ENCODE measurements at regions of chr10 and their contacts with region 1.

Region 1: GRCh38 chr10:102394079-102394800 is 1.3 kb upstream of the NFKB2 start:
- DNase-seq: peak; percentile 95
- H3K4me3 ChIP-seq: peak overlapping the region; percentile 75
- H3K4me3 Mint-ChIP-seq: peak overlapping the region; percentile 90
- H3K27ac Mint-ChIP-seq: peak overlapping the region; percentile 90
- H3K4me1 ChIP-seq: peaks cover 14% of the 10 kb centered on the region
- H3K4me1 Mint-ChIP-seq: peaks cover 14% of the 10 kb centered on the region
- H3K27me3 ChIP-seq: no peaks in the 10 kb centered on the region
- H3K27me3 Mint-ChIP-seq: no peaks in the 10 kb centered on the region
- CTCF ChIP-seq: no peak

Region 2: GRCh38 chr10:102404391-102405107 is 10.3 kb after region 1 on chr10:
- CTCF ChIA-PET with region 1: interaction called, 20 read pairs
- POLR2A ChIA-PET with region 1: interaction called, 6 read pairs
- intact Hi-C with region 1: no loop called
- DNase-seq: no peak
- H3K4me3 ChIP-seq: no peak overlapping the region
- H3K4me3 Mint-ChIP-seq: no peak overlapping the region
- H3K27ac Mint-ChIP-seq: no peak overlapping the region
- H3K4me1 ChIP-seq: peaks cover 26% of the 10 kb centered on the region
- H3K4me1 Mint-ChIP-seq: peaks cover 24% of the 10 kb centered on the region
- H3K27me3 ChIP-seq: no peaks in the 10 kb centered on the region
- H3K27me3 Mint-ChIP-seq: peaks cover 6% of the 10 kb centered on the region
- CTCF ChIP-seq: no peak

Region 3: DNA sequence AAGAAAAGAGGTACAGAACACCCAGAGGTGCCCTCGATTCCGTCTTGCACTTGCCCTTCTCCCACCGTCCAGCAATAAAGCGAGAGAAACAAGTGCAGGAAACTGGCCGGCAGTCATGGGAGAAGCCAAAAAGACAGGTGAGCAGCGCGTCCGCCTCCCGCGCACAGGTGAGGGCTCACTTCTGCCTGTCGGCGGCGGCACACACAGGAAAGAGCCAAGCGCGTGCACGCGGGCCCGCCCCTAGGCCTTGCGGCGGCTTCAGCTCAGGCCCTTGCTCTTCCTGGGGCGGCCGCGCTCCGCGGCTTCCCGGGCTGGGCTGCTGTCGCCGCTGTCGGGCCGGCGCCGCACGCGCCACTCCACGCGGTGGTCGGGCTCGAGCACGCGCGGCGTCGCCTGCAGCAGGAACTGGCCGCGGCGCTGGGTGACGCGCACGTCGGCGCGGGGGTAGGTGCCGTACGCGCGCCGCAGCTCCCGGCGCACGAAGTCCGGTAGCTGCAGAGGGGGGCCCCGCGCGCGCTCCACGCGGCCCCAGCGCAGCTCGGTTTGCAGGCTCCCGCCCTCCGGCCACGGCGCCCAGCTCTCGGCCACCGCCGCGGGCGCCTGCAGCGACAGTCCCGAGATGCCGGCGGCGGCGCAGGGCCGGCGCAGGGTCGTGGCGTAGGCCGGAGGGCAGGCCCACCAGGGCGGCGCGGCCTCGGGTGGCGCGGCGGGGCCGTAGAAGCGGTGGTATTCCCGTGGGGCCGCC is 56.1 kb after region 1 on chr10:
- CTCF ChIA-PET with region 1: interaction called, 5 read pairs
- POLR2A ChIA-PET with region 1: no interaction called
- intact Hi-C with region 1: loop called (anchors 1 kb)
- DNase-seq: peak; percentile 89 to 94
- H3K4me3 ChIP-seq: peak overlapping the region; percentile 84
- H3K4me3 Mint-ChIP-seq: peak overlapping the region; percentile 90
- H3K27ac Mint-ChIP-seq: peak overlapping the region; percentile 90
- H3K4me1 ChIP-seq: peaks cover 39% of the 10 kb centered on the region
- H3K4me1 Mint-ChIP-seq: peaks cover 30% of the 10 kb centered on the region
- H3K27me3 ChIP-seq: no peaks in the 10 kb centered on the region
- H3K27me3 Mint-ChIP-seq: no peaks in the 10 kb centered on the region
- CTCF ChIP-seq: peak in 1 of 2 experiments; percentile 5

Region 4: GRCh38 chr10:102461187-102462054 is 67.2 kb after region 1 on chr10:
- CTCF ChIA-PET with region 1: interaction called, 3 read pairs
- POLR2A ChIA-PET with region 1: no interaction called
- intact Hi-C with region 1: loop called (anchors 1 kb)
- DNase-seq: peak; percentile 94 to 98
- H3K4me3 ChIP-seq: peak overlapping the region; percentile 54
- H3K4me3 Mint-ChIP-seq: peak overlapping the region; percentile 96
- H3K27ac Mint-ChIP-seq: peak overlapping the region; percentile 78
- H3K4me1 ChIP-seq: peaks cover 32% of the 10 kb centered on the region
- H3K4me1 Mint-ChIP-seq: peaks cover 24% of the 10 kb centered on the region
- H3K27me3 ChIP-seq: no peaks in the 10 kb centered on the region
- H3K27me3 Mint-ChIP-seq: no peaks in the 10 kb centered on the region
- CTCF ChIP-seq: no peak

Region 5: GRCh38 chr10:102484021-102484420 is 89.8 kb after region 1 on chr10:
- CTCF ChIA-PET with region 1: no interaction called
- POLR2A ChIA-PET with region 1: no interaction called
- intact Hi-C with region 1: loop called (anchors 1 kb)
- DNase-seq: no peak
- H3K4me3 ChIP-seq: no peak overlapping the region
- H3K4me3 Mint-ChIP-seq: no peak overlapping the region
- H3K27ac Mint-ChIP-seq: no peak overlapping the region
- H3K4me1 ChIP-seq: no peaks in the 10 kb centered on the region
- H3K4me1 Mint-ChIP-seq: no peaks in the 10 kb centered on the region
- H3K27me3 ChIP-seq: no peaks in the 10 kb centered on the region
- H3K27me3 Mint-ChIP-seq: no peaks in the 10 kb centered on the region
- CTCF ChIP-seq: no peak

Region 6: GRCh38 chr10:102583435-102584417 is 189.5 kb after region 1 on chr10:
- CTCF ChIA-PET with region 1: interaction called, 7 read pairs
- POLR2A ChIA-PET with region 1: no interaction called
- intact Hi-C with region 1: loop called (anchors 1 kb)
- DNase-seq: peak; percentile 83 to 86
- H3K4me3 ChIP-seq: no peak overlapping the region
- H3K4me3 Mint-ChIP-seq: no peak overlapping the region
- H3K27ac Mint-ChIP-seq: no peak overlapping the region
- H3K4me1 ChIP-seq: no peaks in the 10 kb centered on the region
- H3K4me1 Mint-ChIP-seq: no peaks in the 10 kb centered on the region
- H3K27me3 ChIP-seq: no peaks in the 10 kb centered on the region
- H3K27me3 Mint-ChIP-seq: no peaks in the 10 kb centered on the region
- CTCF ChIP-seq: peak; percentile 78 to 93